Naive thymus-derived CD4-positive, alpha-beta T cell (primary cell): ENCODE measurements at regions of chr17 and their contacts with region 1.

Region 1: DNA sequence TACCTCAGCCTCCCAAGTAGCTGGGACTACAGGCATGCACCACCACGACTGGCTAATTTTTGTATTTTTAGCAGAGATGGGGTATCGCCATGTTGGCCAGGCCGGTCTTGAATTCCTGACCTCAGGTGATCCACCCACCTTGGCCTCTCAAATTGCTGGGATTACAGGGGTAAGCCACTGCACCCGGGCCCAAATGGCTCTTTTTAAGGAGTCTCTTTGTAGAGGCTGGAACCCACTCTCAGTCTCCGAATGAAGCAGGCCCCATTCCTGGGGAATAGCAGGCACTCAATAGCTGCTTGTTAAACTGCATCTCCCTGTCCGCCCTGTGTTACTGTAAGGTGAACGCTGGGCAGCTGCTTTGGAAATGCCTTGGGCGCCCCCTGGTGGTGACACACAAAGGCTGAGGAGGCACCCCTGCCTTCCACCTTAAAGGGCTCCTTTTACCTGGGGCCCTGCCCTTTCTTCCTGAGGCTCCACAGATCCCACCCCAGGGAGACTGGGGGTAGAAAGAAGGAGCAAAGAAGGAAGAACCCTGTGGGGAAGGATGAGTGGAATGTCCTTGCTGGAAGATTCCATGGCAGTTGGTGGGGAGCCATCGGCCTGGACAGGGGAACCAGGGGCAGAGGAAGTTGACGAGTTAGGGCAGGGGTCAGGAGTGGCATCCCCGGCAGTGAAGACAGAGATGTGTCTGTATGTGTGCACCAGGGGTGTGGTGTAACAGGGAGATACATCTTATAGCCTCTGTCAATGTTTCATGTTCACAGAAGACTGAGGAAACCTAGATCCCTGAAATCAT is 6.1 kb upstream of the SP2 start:
- DNase-seq: peak; percentile 77 to 91 (median 88)
- ATAC-seq: peak; percentile 99
- H3K4me3 ChIP-seq: no peak overlapping the region
- H3K4me3 Mint-ChIP-seq: peak overlapping the region in 1 of 10 donors; percentile 53
- H3K27ac ChIP-seq: no peak overlapping the region
- H3K27ac Mint-ChIP-seq: peak overlapping the region in 4 of 9 donors; percentile 34 to 60 (median 56)
- H3K4me1 ChIP-seq: peaks cover 6 to 13% of the 10 kb centered on the region in 2 donors
- H3K4me1 Mint-ChIP-seq: peaks cover 21 to 37% (median 33%) of the 10 kb centered on the region in 7 donors
- H3K27me3 ChIP-seq: no peaks in the 10 kb centered on the region
- H3K27me3 Mint-ChIP-seq: no peaks in the 10 kb centered on the region

Region 2: GRCh38 chr17:47246120-47246519 is 643.8 kb before region 1 on chr17:
- CTCF ChIA-PET with region 1: no interaction called
- POLR2A ChIA-PET with region 1: no interaction called
- intact Hi-C with region 1: no loop called
- DNase-seq: no peak
- ATAC-seq: no peak
- H3K4me3 ChIP-seq: no peak overlapping the region
- H3K4me3 Mint-ChIP-seq: no peak overlapping the region
- H3K27ac ChIP-seq: no peak overlapping the region
- H3K27ac Mint-ChIP-seq: no peak overlapping the region
- H3K4me1 ChIP-seq: no peaks in the 10 kb centered on the region
- H3K4me1 Mint-ChIP-seq: no peaks in the 10 kb centered on the region
- H3K27me3 ChIP-seq: peaks cover 0 to 3% of the 10 kb centered on the region in 2 donors
- H3K27me3 Mint-ChIP-seq: peaks cover 9 to 70% (median 22%) of the 10 kb centered on the region in 5 donors

Region 3: GRCh38 chr17:47776330-47777197 is 113.4 kb before region 1 on chr17:
- CTCF ChIA-PET with region 1: interaction called, 4 read pairs
- POLR2A ChIA-PET with region 1: no interaction called
- intact Hi-C with region 1: loop called (anchors 1 kb)
- DNase-seq: peak in 7 of 9 donors; percentile 17 to 59 (median 41)
- ATAC-seq: peak; percentile 85
- H3K4me3 ChIP-seq: no peak overlapping the region
- H3K4me3 Mint-ChIP-seq: no peak overlapping the region
- H3K27ac ChIP-seq: no peak overlapping the region
- H3K27ac Mint-ChIP-seq: peak overlapping the region in 1 of 9 donors; percentile 38
- H3K4me1 ChIP-seq: no peaks in the 10 kb centered on the region
- H3K4me1 Mint-ChIP-seq: peaks cover 0 to 5% (median 0%) of the 10 kb centered on the region in 7 donors
- H3K27me3 ChIP-seq: peaks cover 0 to 11% of the 10 kb centered on the region in 2 donors
- H3K27me3 Mint-ChIP-seq: peaks cover 35 to 60% (median 45%) of the 10 kb centered on the region in 5 donors

Region 4: DNA sequence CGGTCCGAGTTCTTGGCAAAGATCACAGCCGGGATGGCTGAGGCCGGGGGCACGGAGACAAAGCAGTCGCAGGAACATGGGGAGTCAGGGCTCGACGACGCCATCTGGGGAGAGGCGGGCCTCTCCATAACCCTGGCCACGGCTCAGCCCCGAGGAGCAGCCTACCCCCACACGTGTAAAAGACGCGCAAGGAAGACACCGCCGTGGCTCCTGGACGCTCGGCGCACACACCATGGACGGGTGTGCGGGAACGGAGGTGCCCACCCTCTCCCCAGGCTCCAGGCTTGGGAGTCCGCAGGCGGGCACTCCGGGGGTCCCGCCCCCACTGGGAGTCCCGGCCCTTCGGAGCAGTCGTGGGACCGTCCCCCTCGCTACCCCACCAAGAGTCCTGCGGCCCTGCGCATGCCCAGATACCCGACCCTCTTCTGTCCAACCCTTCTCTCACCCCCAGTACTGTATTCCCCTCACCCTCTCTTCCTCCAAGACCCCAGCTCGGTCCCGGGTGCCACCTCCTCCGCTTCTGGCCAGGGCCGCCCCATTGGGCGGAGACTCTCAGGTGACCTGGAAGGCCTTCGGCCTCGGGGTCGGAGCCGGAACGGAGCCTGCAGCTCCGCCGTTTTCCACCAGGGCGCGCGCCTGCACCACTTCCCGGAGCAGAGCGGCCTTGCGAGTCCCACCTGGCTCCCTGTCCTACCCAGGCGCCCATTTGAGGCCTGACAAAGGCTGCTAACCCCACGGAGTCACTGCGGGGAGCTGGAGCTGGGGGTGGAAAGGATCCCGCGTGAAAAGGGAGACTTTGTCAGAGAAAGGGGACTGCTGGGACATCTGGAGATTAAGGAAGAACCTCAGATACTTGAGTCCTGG is 49.0 kb before region 1 on chr17 and contains the start of gene SCRN2:
- CTCF ChIA-PET with region 1: interaction called, 290 read pairs
- POLR2A ChIA-PET with region 1: interaction called, 42 read pairs
- intact Hi-C with region 1: loop called (anchors 1 kb)
- DNase-seq: peak; percentile 71 to 94 (median 81)
- ATAC-seq: peak; percentile 94
- H3K4me3 ChIP-seq: peak within 1 kb of the TSS; percentile 95
- H3K4me3 Mint-ChIP-seq: peak within 1 kb of the TSS; percentile 84 to 99 (median 94)
- H3K27ac ChIP-seq: peak within 1 kb of the TSS; percentile 75
- H3K27ac Mint-ChIP-seq: peak within 1 kb of the TSS; percentile 55 to 93 (median 86)
- H3K4me1 ChIP-seq: peaks cover 19 to 21% of the 10 kb centered on the region in 2 donors
- H3K4me1 Mint-ChIP-seq: peaks cover 9 to 49% (median 38%) of the 10 kb centered on the region in 7 donors
- H3K27me3 ChIP-seq: peaks cover 0 to 7% of the 10 kb centered on the region in 2 donors
- H3K27me3 Mint-ChIP-seq: peaks cover 6 to 23% (median 18%) of the 10 kb centered on the region in 5 donors
- total RNA-seq, gene SCRN2: 33.4 to 55.9 (median 41.4) TPM

Region 5: GRCh38 chr17:47850692-47851573 is 39.0 kb before region 1 on chr17 and contains the start of gene SP6:
- CTCF ChIA-PET with region 1: interaction called, 290 read pairs
- POLR2A ChIA-PET with region 1: interaction called, 38 read pairs
- intact Hi-C with region 1: no loop called
- DNase-seq: peak in 4 of 9 donors; percentile 24 to 71 (median 38)
- ATAC-seq: peak; percentile 77
- H3K4me3 ChIP-seq: peak within 1 kb of the TSS; percentile 20
- H3K4me3 Mint-ChIP-seq: peak within 1 kb of the TSS; percentile 48 to 80 (median 68)
- H3K27ac ChIP-seq: no peak within 1 kb of the TSS
- H3K27ac Mint-ChIP-seq: peak within 1 kb of the TSS in 3 of 9 donors; percentile 11 to 51 (median 13)
- H3K4me1 ChIP-seq: peaks cover 6 to 14% of the 10 kb centered on the region in 2 donors
- H3K4me1 Mint-ChIP-seq: peaks cover 18 to 39% (median 22%) of the 10 kb centered on the region in 7 donors
- H3K27me3 ChIP-seq: peaks cover 6 to 39% of the 10 kb centered on the region in 2 donors
- H3K27me3 Mint-ChIP-seq: peaks cover 63 to 94% (median 77%) of the 10 kb centered on the region in 5 donors
- total RNA-seq, gene SP6: 0.16 to 0.29 (median 0.22) TPM in 3 of 5 experiments, not detected in the others